GM10248 (cell line): ENCODE measurements at regions of chr10 and their contacts with region 1.

Region 1: GRCh38 chr10:77821551-77821950 is 105.0 kb downstream of the DLG5 start:
- DNase-seq: no peak
- CTCF ChIP-seq: no peak

Region 2: GRCh38 chr10:77970869-77971803 is 149.6 kb after region 1 on chr10:
- CTCF ChIA-PET with region 1: no interaction called
- POLR2A ChIA-PET with region 1: interaction called, 10 read pairs
- DNase-seq: peak; percentile 40
- CTCF ChIP-seq: no peak